Lower lobe of right lung (tissue), 2 donors: ENCODE measurements at regions of chr4 and their contacts with region 1.

Region 1: DNA sequence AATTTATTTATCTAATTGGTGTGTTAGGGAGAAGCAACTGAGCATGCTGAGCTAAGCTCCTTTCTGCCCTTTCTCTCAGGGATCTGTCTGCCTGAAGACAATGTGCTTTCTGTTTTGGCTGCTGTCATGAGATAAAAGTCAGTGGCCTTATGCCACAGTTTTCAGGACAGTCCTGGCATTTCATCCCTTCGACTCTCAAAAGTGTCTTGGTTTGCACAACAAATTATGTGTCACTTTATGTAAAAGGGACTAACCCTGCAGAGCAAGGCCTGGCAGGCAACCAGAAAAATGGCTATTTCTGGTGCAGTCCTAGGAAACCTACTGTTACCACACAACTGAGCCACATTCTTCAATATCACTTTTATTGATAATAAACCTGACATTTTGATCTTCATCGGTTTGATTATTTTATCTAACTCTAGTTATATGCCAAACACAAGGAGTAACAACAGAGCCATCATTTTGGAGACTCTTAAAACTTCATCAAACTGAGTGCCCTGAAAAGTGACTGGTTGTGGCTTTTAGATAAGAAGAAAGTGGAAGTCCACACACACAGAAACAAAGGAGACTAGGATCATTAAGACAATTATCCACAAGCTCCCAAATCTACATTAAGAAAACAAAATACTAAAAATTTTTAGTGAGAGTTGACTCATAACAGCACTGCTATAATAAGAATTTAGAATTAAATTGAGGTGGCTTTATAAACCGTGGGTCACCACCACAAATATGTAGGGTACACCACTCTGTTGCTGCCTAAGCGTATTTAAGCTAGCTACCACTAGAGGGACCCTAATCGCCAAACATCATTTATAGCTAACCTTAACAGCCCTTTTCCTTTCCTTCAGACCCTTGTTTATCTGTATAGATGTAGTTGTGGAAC is 95.9 kb upstream of the PTPN13 start:
- DNase-seq: no peak
- ATAC-seq: peak; percentile 89 to 90
- H3K4me3 ChIP-seq: no peak overlapping the region
- H3K27ac ChIP-seq: no peak overlapping the region
- H3K4me1 ChIP-seq: peaks cover 30% of the 10 kb centered on the region
- H3K27me3 ChIP-seq: no peaks in the 10 kb centered on the region
- CTCF ChIP-seq: peak; percentile 80

Region 2: GRCh38 chr4:86685401-86685800 is 187.2 kb after region 1 on chr4:
- intact Hi-C with region 1: no loop called
- DNase-seq: no peak
- ATAC-seq: peak; percentile 32 to 41
- H3K4me3 ChIP-seq: no peak overlapping the region
- H3K27ac ChIP-seq: no peak overlapping the region
- H3K4me1 ChIP-seq: no peaks in the 10 kb centered on the region
- H3K27me3 ChIP-seq: no peaks in the 10 kb centered on the region
- CTCF ChIP-seq: no peak

Region 3: DNA sequence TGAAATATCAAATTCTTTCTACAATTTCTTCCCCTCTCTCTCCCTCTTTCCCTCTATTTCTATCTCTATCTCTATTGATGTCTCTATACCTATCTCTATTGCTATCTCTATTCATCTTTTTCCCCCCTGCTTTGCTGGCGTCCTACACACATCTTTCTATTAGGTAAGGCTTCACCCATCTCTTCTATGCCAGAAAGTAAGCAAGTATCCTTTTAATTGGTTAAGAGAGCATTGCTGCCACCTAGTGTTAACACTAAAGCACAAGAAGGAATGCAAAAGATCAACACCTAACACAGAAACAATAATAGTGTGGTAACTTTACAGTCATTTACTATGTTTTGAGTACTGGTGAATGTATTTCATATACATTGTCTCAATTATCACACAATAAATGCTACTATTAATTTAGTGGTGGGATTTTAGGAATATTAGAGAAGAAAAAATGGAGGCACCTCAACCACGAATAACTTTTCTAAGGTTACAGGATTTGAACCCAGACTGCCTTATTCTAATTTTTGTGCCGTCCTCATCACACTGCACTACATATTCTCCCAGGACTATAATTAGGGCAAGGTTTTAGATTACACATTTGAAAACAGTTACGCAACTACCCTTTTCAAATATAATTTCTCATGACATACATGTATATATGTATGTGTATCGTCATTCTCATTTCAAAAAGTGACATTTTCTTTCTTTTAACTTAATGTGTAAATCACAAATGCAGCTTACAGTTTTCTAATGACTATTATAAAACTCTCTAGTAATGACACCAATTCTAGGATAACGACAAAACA is 397.7 kb after region 1 on chr4:
- intact Hi-C with region 1: loop called (anchors 5 kb)
- DNase-seq: no peak
- ATAC-seq: peak in 1 of 2 donors; percentile 28
- H3K4me3 ChIP-seq: no peak overlapping the region
- H3K27ac ChIP-seq: no peak overlapping the region
- H3K4me1 ChIP-seq: peaks cover 10% of the 10 kb centered on the region
- H3K27me3 ChIP-seq: no peaks in the 10 kb centered on the region
- CTCF ChIP-seq: peak; percentile 77